Endothelial cell of umbilical vein (primary cell): ENCODE measurements at regions of chr2 and their contacts with region 1.

Region 1: GRCh38 chr2:27010139-27010538 is 22.6 kb upstream of the TMEM214 start:
- DNase-seq: no peak
- H3K4me3 ChIP-seq: no peak overlapping the region
- H3K27ac ChIP-seq: no peak overlapping the region
- H3K4me1 ChIP-seq: peaks cover 4% of the 10 kb centered on the region
- H3K27me3 ChIP-seq: no peaks in the 10 kb centered on the region
- CTCF ChIP-seq: no peak
- POLR2A ChIP-seq: no peak

Region 2: DNA sequence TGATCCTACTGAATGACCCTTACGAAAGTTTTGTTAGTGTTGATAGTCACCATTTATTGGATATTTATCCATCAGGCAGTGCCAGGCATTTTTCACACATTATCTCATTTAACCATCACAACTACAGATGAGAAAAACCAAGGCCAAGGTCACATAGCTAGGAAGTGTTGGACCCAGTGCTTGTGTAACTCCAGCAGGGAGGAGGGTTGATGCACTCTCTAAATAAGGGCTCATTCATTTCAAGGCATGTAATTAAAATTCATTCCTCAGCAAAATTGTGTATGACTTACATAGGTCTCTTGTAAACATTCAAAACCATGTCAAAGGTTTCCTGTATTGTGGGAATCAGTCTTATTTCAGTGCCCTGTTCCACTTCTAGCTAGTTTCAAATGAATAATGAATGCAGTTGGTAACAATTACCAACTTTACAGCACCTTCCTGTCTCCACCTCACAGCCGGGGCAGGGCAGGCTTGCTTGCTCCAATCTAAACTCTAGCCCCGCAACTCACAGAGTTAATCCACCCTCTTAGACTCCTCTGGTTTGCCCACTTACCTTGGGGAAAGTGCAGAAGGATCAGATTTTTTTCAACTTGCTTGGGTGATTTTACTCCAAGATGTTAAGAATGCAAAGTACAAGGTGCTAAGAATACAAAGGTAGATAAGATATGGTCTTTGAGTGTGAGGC is 45.6 kb before region 1 on chr2:
- CTCF ChIA-PET with region 1: interaction called, 355 read pairs
- POLR2A ChIA-PET with region 1: no interaction called
- dilution Hi-C with region 1: no loop called
- intact Hi-C with region 1: no loop called
- DNase-seq: no peak
- H3K4me3 ChIP-seq: no peak overlapping the region
- H3K27ac ChIP-seq: no peak overlapping the region
- H3K4me1 ChIP-seq: no peaks in the 10 kb centered on the region
- H3K27me3 ChIP-seq: peaks cover 31 to 34% of the 10 kb centered on the region in 2 experiments
- CTCF ChIP-seq: no peak
- POLR2A ChIP-seq: no peak

Region 3: DNA sequence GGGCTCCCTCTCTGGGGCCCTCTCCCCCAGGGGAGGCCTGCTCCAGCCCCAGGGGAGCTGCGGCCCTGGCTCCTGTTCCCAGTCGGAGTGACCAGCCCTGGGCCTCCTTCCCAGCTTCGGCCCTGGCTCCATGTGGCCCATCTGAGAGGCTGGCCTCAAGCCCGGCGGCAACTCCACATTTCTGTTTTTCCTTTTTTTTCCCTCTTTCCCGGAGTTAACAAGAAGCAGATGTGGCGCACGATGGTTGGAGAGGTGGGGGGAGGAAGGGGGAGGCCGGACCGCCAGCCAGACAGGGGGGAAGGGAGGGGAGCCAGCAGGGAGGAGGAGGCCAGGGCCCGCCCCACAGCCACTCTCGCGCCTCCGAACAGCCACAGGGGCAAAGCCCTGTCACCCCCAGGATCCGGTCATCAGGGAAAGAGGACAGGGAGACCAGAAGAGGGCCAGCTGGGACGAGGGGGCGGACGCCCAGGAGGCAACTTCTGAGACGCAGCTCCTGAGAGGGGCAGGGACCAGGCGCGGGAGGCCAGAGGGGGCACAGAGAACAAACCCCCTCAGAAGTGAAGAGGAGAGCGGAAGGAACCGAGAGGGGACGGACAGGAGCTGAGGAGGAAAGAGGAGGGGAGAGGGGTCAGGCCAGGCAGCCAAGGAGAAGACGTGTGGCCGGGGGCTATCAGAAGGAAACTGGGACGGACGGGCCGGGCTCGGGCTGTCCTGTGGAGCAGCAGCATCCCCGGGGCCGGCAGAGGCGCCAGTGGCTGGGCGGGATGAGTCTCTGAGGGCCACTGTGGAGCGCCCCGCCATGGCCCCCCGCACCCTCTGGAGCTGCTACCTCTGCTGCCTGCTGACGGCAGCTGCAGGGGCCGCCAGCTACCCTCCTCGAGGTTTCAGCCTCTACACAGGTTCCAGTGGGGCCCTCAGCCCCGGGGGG is 68.4 kb after region 1 on chr2 and contains the start of gene EMILIN1:
- CTCF ChIA-PET with region 1: no interaction called
- POLR2A ChIA-PET with region 1: no interaction called
- dilution Hi-C with region 1: no loop called
- intact Hi-C with region 1: no loop called
- DNase-seq: peak; percentile 51
- H3K4me3 ChIP-seq: peak within 1 kb of the TSS in 1 of 3 experiments; percentile 28
- H3K27ac ChIP-seq: no peak within 1 kb of the TSS
- H3K4me1 ChIP-seq: peaks cover 8% of the 10 kb centered on the region
- H3K27me3 ChIP-seq: no peaks in the 10 kb centered on the region
- CTCF ChIP-seq: no peak
- POLR2A ChIP-seq: no peak
- total RNA-seq, gene EMILIN1: 4.1 and 16.6 TPM in 2 replicates